Transverse colon (tissue), 4 donors: ENCODE measurements at regions of chr17 and their contacts with region 1.

Region 1: GRCh38 chr17:60435244-60436167 is 13.2 kb downstream of the CHCT1 start:
- DNase-seq: peak; percentile 67
- H3K4me3 ChIP-seq: no peak overlapping the region
- H3K27ac ChIP-seq: no peak overlapping the region
- H3K4me1 ChIP-seq: no peaks in the 10 kb centered on the region
- H3K27me3 ChIP-seq: no peaks in the 10 kb centered on the region
- CTCF ChIP-seq: peak; percentile 85 to 95 (median 91)
- EP300 ChIP-seq: no peak
- POLR2A ChIP-seq: no peak

Region 2: DNA sequence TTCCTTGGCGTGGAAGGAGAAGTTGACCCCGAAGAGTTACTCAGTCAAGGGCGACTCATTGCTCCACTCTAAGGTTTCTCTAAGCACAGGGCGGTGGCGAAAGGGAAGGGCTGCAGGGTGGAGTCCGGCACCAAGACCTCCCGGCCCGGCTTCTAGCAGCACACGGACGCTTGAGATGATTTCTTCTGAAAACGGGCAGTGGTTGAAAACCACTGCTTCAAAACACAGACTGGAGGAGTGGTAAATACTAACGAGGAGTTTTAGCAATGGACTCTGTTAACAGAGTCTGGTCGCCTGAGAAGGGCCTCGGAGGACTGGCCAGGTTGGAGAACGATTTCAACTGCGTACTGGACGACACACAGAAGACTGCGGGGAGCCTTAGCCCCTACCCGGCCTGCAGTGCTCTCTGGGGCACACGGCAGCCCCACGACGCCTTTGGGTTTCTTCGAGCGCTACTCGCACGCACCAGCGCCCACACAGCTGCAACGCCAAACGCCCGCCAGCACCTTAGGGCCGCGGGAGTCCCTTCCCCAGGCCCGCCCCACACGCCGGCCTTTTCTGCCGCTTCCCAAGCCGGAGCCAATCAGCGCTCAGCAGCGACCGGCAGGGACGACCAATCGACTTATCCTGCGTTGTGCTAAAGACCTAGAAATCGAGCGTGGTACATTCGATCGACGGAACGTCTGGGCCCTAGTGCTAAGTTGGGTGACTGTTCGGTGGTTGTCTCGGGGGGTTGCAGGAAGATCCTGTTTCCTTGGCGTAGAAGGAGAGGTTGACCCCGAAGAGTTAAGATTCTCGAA is 300.2 kb before region 1 on chr17:
- in situ Hi-C with region 1: loop called in 2 of 4 experiments (anchors 25 kb)
- intact Hi-C with region 1: loop called (anchors 10 kb)
- DNase-seq: peak; percentile 92
- H3K4me3 ChIP-seq: peak overlapping the region; percentile 32 to 73 (median 65)
- H3K27ac ChIP-seq: peak overlapping the region; percentile 71 to 84 (median 76)
- H3K4me1 ChIP-seq: peaks cover 5 to 26% (median 16%) of the 10 kb centered on the region in 4 donors
- H3K27me3 ChIP-seq: peaks cover 28% of the 10 kb centered on the region
- CTCF ChIP-seq: no peak
- EP300 ChIP-seq: no peak
- POLR2A ChIP-seq: peak; percentile 80

Region 3: DNA sequence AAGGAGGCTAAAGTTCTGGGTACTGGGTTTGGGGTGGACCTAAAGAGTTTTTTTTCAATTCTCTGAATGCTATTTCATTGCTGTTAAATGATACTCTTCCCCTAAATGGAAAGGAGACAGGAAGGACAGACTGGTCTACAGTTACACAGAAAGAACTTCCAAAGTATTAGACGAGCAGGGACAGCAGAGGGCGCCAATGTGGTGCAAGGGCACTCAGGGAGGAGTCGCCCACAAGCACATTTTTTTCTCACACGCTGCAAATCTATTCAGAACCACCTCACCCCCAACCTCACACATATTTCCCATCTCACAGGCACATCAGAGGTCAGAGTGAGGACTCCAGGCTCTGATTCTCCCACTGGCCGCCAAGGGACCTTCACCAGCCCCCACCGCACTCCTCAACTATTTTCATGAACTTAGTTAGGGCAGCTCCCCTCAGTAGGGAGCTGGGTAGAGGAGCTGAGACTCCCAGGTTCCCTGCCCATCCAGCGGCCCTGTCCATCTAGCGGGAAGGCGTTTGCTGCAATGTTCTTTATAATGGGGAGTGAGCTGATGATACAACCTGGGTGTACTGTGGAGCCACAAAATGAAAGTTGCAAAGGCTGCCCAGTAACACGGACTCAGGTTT is 292.5 kb before region 1 on chr17:
- in situ Hi-C with region 1: loop called in 2 of 4 experiments (anchors 25 kb)
- intact Hi-C with region 1: loop called (anchors 10 kb)
- DNase-seq: peak; percentile 91
- H3K4me3 ChIP-seq: peak overlapping the region in 1 of 4 donors; percentile 11
- H3K27ac ChIP-seq: peak overlapping the region in 2 of 4 donors; percentile 45 to 59
- H3K4me1 ChIP-seq: peaks cover 2 to 40% (median 21%) of the 10 kb centered on the region in 4 donors
- H3K27me3 ChIP-seq: peaks cover 83% of the 10 kb centered on the region
- CTCF ChIP-seq: peak; percentile 59 to 71 (median 70)
- EP300 ChIP-seq: no peak
- POLR2A ChIP-seq: no peak

Region 4: DNA sequence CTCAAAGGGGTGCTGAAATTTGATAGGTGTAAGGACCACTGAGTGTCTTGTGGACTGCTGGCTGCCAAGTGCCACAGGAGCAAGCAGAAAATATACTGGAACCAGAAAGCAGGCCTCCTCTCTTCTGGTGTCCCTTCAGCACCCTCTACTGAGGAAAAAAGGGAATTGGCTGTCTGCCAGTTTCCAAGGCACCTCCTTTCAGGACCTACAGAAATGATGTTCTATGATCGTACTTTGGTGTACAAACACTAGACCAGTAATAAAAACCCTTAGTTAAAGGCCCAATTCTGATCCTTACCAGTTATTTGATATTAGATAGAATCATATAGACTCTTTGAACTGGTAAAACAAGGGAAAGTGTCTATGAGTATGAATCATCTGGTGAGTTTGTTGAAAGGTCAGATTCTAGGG is 206.3 kb after region 1 on chr17:
- in situ Hi-C with region 1: loop called in 1 of 4 experiments (anchors 25 kb)
- intact Hi-C with region 1: no loop called
- DNase-seq: peak; percentile 70
- H3K4me3 ChIP-seq: no peak overlapping the region
- H3K27ac ChIP-seq: peak overlapping the region in 1 of 4 donors; percentile 17
- H3K4me1 ChIP-seq: peaks cover 0 to 9% (median 6%) of the 10 kb centered on the region in 4 donors
- H3K27me3 ChIP-seq: no peaks in the 10 kb centered on the region
- CTCF ChIP-seq: peak; percentile 25 to 45 (median 35)
- EP300 ChIP-seq: no peak
- POLR2A ChIP-seq: no peak